WTC11 (cell line): ENCODE measurements at regions of chr9 and their contacts with region 1.

Region 1: GRCh38 chr9:21995177-21996086 is 841 bp downstream of the CDKN2B-AS1 start:
- DNase-seq: peak; percentile 79
- ATAC-seq: peak; percentile 50
- H3K4me3 Mint-ChIP-seq: peak overlapping the region; percentile 63
- H3K27ac Mint-ChIP-seq: no peak overlapping the region
- H3K4me1 Mint-ChIP-seq: peaks cover 36% of the 10 kb centered on the region
- H3K27me3 Mint-ChIP-seq: peaks cover 94% of the 10 kb centered on the region
- CTCF ChIP-seq: no peak

Region 2: DNA sequence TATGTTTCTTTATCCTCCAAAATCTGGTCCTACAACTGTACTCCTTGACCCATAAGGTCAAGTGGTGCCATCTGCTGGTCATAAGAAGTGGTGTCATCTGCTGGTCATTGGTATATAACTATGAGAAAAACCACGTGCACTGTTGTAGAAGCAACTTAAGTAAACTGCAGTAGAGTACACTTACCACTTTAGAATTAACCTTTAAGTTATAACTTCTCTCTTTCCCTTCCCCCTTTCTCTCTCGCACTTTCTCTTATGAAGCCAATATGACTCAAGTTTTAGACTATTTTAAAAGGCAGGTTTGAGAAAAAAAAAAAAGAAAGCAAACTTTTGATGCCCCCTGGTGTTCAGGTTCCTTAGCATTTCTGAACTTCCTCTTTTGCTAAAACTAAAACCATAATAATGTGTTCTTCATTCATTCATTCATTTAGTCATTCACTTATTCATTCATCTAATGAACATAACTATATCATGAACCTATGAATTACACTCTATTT is 205.8 kb before region 1 on chr9:
- CTCF ChIA-PET with region 1: no interaction called
- POLR2A ChIA-PET with region 1: no interaction called
- DNase-seq: peak; percentile 34
- ATAC-seq: peak; percentile 92
- H3K4me3 Mint-ChIP-seq: no peak overlapping the region
- H3K27ac Mint-ChIP-seq: no peak overlapping the region
- H3K4me1 Mint-ChIP-seq: no peaks in the 10 kb centered on the region
- H3K27me3 Mint-ChIP-seq: peaks cover 40% of the 10 kb centered on the region
- CTCF ChIP-seq: peak; percentile 67

Region 3: GRCh38 chr9:21902136-21902535 is 93.3 kb before region 1 on chr9:
- CTCF ChIA-PET with region 1: no interaction called
- POLR2A ChIA-PET with region 1: no interaction called
- DNase-seq: no peak
- ATAC-seq: no peak
- H3K4me3 Mint-ChIP-seq: no peak overlapping the region
- H3K27ac Mint-ChIP-seq: no peak overlapping the region
- H3K4me1 Mint-ChIP-seq: peaks cover 9% of the 10 kb centered on the region
- H3K27me3 Mint-ChIP-seq: peaks cover 14% of the 10 kb centered on the region
- CTCF ChIP-seq: no peak

Region 4: DNA sequence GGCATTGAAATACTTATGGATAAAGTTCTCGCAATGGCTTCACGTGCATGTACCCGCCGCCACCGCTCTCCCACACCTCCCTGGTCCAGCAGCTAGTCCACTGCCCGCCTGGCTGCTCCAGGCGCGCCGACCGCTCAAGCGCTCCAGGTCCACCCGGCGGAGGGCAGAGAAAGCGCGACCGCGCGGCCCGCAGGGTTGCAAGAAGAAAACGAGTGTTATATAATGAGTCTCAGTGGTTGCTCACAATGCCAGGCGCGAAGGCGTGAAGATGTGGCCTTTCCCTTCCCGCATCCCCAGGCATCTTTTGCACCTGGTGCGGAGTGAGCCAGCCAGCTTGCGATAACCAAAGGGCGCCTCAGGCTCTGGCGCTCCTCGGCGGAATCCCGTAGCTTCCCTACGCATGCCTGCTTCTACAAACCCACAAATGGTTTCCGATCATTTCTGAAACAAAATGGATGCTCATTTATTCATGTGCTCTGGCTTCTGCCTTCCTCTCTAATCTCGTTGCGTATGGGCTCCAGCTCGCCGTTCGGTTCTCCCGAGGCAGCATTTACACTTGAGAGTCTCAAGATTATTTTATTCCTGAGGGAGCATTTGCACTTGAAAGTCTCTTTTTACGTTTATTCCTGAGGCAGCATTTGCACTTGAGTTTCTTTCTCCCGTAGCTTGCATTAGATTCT is 27.0 kb before region 1 on chr9:
- CTCF ChIA-PET with region 1: interaction called, 10 read pairs
- POLR2A ChIA-PET with region 1: no interaction called
- DNase-seq: peak; percentile 32
- ATAC-seq: peak; percentile 5
- H3K4me3 Mint-ChIP-seq: peak overlapping the region; percentile 45
- H3K27ac Mint-ChIP-seq: no peak overlapping the region
- H3K4me1 Mint-ChIP-seq: peaks cover 60% of the 10 kb centered on the region
- H3K27me3 Mint-ChIP-seq: peaks cover 100% of the 10 kb centered on the region
- CTCF ChIP-seq: no peak

Region 5: GRCh38 chr9:22030101-22030598 is 34.7 kb after region 1 on chr9:
- CTCF ChIA-PET with region 1: no interaction called
- POLR2A ChIA-PET with region 1: no interaction called
- DNase-seq: no peak
- ATAC-seq: peak; percentile 38; the same call in 1 of the 2 replicates
- H3K4me3 Mint-ChIP-seq: no peak overlapping the region
- H3K27ac Mint-ChIP-seq: no peak overlapping the region
- H3K4me1 Mint-ChIP-seq: peaks cover 12% of the 10 kb centered on the region
- H3K27me3 Mint-ChIP-seq: no peaks in the 10 kb centered on the region
- CTCF ChIP-seq: no peak

Region 6: GRCh38 chr9:22088718-22089064 is 93.3 kb after region 1 on chr9:
- CTCF ChIA-PET with region 1: no interaction called
- POLR2A ChIA-PET with region 1: no interaction called
- DNase-seq: no peak
- ATAC-seq: no peak
- H3K4me3 Mint-ChIP-seq: no peak overlapping the region
- H3K27ac Mint-ChIP-seq: no peak overlapping the region
- H3K4me1 Mint-ChIP-seq: peaks cover 6% of the 10 kb centered on the region
- H3K27me3 Mint-ChIP-seq: no peaks in the 10 kb centered on the region; the same call in none of the 2 replicates
- CTCF ChIP-seq: no peak